PC-9 (cell line): ENCODE measurements at regions of chr17 and their contacts with region 1.

Region 1: GRCh38 chr17:82003411-82004381 is 19.0 kb downstream of the CENPX start:
- DNase-seq: peak; percentile 80 to 96
- H3K4me3 ChIP-seq: no peak overlapping the region
- H3K27ac ChIP-seq: peak overlapping the region; percentile 31; the same call in 1 of the 2 replicates
- H3K4me1 ChIP-seq: peaks cover 22% of the 10 kb centered on the region
- H3K27me3 ChIP-seq: no peaks in the 10 kb centered on the region
- CTCF ChIP-seq: no peak

Region 2: GRCh38 chr17:81890447-81891299 is 113.0 kb before region 1 on chr17:
- CTCF ChIA-PET with region 1: no interaction called
- POLR2A ChIA-PET with region 1: no interaction called
- intact Hi-C with region 1: no loop called
- DNase-seq: no peak
- H3K4me3 ChIP-seq: peak overlapping the region; percentile 66
- H3K27ac ChIP-seq: no peak overlapping the region
- H3K4me1 ChIP-seq: peaks cover 21% of the 10 kb centered on the region
- H3K27me3 ChIP-seq: no peaks in the 10 kb centered on the region
- CTCF ChIP-seq: no peak

Region 3: DNA sequence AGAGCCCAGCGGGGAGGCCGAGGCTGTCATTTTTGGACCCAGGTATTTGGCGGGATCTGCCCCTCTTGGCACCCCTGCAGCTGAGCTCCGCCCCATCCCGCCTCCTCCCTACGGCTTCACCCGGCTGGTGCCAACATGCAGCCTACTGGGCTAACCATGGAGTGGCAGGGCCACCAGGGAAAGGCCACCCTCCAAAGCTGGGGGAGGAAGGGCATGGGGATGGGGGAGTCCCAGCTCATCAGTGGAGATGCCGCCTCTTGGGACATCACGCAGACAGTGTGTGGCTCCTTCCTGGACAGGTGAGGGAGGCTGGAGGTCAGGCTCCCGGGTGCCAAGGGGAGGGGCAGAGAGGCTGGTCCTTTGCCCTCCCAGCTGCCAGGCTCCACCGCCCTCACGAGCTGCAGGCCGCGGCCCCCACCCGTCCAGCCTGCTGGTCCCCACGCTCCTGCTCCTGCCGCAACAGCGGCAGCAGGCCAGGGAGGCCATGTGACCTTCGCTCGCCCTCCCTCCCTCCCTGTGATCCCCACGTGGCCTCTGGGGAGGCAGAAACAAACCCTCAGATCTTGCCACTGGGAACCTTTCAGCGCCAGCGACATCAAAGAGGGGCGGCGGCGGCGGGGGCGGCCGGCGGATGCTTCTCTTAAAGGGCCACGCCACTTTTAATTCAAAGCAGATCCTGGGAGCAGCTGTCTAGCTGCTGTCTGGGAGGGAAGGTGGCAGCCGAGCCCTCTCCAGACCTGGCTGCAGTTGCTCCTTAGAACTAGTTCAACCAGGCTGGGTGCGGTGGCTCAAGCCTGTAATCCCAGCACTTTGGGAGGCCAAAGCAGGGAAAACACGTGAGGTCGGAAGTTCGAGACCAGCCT is 35.9 kb before region 1 on chr17:
- CTCF ChIA-PET with region 1: no interaction called
- POLR2A ChIA-PET with region 1: no interaction called
- intact Hi-C with region 1: loop called (anchors 5 kb)
- DNase-seq: peak in 1 of 2 experiments; percentile 69
- H3K4me3 ChIP-seq: no peak overlapping the region
- H3K27ac ChIP-seq: no peak overlapping the region
- H3K4me1 ChIP-seq: no peaks in the 10 kb centered on the region
- H3K27me3 ChIP-seq: no peaks in the 10 kb centered on the region
- CTCF ChIP-seq: no peak

Region 4: DNA sequence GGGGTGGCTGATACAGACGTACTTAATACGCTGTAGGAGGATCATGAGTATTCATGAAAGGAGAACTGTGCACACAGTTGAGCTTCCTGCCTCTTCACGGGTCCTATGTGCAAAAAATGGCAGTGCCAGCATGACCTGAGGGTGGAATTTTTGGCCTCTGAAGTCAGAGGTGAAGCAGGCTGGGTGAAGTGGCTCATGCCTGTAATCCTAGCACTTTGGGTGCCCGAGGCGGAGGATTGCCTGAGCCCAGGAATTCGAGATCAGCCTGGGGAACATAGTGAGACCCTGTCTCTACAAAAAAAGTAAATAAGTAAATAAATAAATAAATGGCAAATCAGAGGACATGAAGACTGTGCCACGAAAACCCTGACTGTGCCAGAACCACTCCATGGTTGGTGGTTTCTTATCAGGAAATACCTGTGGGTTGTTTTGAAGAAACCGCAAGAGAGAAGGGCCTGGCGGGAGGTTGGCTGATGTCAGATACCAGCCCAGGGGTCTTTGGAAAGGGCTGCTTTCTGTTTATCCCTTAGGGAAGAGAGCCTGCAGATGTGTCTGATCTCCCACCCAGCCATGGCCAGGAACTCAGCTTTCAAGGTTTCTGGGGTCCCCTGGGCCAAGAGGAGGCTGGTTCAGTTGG is 22.9 kb before region 1 on chr17:
- CTCF ChIA-PET with region 1: no interaction called
- POLR2A ChIA-PET with region 1: no interaction called
- intact Hi-C with region 1: loop called (anchors 1 kb)
- DNase-seq: peak; percentile 87 to 92
- H3K4me3 ChIP-seq: no peak overlapping the region
- H3K27ac ChIP-seq: peak overlapping the region; percentile 86
- H3K4me1 ChIP-seq: peaks cover 33% of the 10 kb centered on the region
- H3K27me3 ChIP-seq: no peaks in the 10 kb centered on the region
- CTCF ChIP-seq: no peak

Region 5: DNA sequence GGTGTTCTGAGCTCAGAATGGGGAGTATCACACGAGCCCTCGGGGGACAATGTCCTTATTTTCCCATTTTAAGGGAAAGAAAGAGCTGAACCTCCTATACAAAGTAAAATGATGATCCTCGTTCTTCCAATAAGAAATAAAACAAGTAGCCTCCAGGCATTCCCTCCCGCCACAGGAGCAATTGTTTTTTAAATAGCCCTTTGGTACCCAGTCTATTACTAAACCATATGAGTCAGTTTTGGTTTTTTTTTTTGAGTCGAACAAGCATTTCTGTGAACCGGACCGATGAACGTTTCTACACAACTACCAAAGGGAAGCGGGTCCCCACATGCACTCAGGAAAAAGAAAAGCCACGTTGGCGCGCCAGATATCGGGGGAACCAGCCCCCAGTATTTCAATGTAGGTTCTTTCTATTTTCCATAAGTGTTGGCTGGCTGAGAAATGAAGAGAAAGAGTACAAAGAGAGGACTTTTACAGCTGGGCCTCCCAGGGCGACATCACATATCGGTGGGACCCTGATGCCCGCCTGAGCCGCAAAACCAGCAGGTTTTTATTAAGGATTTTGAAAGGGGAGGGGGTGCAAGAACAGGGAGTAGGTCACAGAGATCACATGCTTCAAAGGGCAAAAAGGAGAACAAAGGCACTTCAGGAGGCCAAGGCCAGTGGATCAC is 37.6 kb after region 1 on chr17:
- CTCF ChIA-PET with region 1: no interaction called
- POLR2A ChIA-PET with region 1: no interaction called
- intact Hi-C with region 1: no loop called
- DNase-seq: no peak
- H3K4me3 ChIP-seq: no peak overlapping the region
- H3K27ac ChIP-seq: no peak overlapping the region
- H3K4me1 ChIP-seq: 0 out of 2 replicates have a peak, but pooled peaks cover 5% of the 10 kb centered on the region
- H3K27me3 ChIP-seq: no peaks in the 10 kb centered on the region
- CTCF ChIP-seq: no peak